IMR-90 (cell line): ENCODE measurements at regions of chr12 and their contacts with region 1.

Region 1: DNA sequence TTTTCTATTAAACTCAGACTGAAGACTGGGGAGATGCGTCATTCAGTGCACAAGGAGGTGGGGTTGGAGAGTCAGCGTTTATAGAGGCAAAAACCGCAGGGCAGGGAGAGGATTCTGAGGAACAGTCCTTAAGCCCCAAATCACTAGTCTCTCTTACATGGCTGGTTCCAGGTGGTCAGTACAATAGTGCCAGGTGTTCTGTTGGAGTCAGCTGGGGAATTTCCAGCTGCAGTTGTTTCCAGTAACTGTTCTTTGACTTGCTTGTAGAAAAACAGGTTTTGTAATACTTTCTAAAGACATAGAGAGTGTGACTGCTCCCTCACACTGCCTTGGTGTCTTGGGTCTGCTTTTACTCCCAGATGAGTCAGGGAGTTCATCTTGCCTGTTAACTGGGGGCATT is 192.2 kb downstream of the TMTC3 start:
- DNase-seq: peak; percentile 63
- ATAC-seq: peak; percentile 60
- H3K4me3 ChIP-seq: no peak overlapping the region
- H3K27ac ChIP-seq: peak overlapping the region; percentile 63
- H3K4me1 ChIP-seq: peaks cover 3% of the 10 kb centered on the region; the same call in 1 of the 2 replicates
- H3K27me3 ChIP-seq: no peaks in the 10 kb centered on the region
- CTCF ChIP-seq: no peak
- POLR2A ChIP-seq: no peak
- RAD21 ChIP-seq: no peak

Region 2: GRCh38 chr12:88519802-88520435 is 185.6 kb after region 1 on chr12:
- CTCF ChIA-PET with region 1: no interaction called
- POLR2A ChIA-PET with region 1: no interaction called
- dilution Hi-C with region 1: no loop called
- in situ Hi-C with region 1: no loop called
- intact Hi-C with region 1: loop called (anchors 10 kb)
- DNase-seq: peak; percentile 41
- ATAC-seq: no peak
- H3K4me3 ChIP-seq: no peak overlapping the region
- H3K27ac ChIP-seq: peak overlapping the region; percentile 46; the same call in 1 of the 2 replicates
- H3K4me1 ChIP-seq: no peaks in the 10 kb centered on the region
- H3K27me3 ChIP-seq: no peaks in the 10 kb centered on the region
- CTCF ChIP-seq: no peak
- POLR2A ChIP-seq: no peak
- RAD21 ChIP-seq: no peak